ENCODE measurements at regions of chr16 and their contacts with region 1.

Region 1: DNA sequence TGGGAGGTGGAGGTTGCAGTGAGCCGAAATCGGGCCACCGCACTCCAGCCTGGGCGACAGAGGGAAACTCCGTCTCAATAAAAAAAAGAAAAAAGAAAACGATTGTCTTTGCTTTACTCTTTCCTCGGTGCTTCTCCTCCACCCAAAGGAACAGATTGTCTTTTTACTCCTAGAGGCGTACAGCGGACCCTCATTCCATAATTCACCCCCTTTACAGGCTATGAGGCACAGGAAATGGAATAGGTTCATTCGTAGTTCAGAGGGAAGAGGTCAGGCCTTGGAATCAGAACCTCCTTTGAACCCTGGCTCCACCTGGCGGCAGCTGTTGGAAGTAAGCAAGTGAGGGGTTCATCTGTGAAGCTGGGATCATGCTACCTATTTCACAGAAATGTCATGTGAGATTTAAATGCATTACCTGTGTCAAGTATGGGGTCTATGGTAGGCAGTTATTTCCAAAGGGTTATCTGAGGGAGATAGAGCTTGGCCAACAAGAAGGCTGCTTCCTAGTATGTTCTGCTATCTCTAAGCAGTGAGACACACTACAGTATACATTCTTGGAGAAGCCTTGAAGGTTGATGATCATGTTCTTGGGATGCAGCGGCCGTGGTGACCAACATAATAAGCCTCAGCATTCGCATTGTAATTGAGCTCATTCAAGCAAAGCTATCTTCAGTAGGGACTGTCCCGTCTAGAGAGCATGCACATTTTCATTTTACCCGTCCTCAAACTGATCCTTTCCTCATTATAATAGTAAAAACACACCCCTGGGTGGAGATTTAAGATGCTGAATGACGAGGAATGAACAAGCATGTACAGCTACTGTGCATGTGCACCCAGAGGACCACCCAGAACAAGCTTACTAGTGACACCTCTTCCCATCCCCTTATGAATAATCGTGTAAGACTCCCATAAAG is 18.7 kb upstream of the ZNF689 start:
- DNase-seq: peak in 1 of 2 donors; percentile 93
- H3K4me3 ChIP-seq: peak overlapping the region in 1 of 2 donors; percentile 40
- H3K27ac ChIP-seq: no peak overlapping the region
- H3K4me1 ChIP-seq: peaks cover 0 to 3% of the 10 kb centered on the region in 2 donors
- H3K27me3 ChIP-seq: no peaks in the 10 kb centered on the region
- CTCF ChIP-seq: peak; percentile 76 to 89 (median 85)

Region 2: DNA sequence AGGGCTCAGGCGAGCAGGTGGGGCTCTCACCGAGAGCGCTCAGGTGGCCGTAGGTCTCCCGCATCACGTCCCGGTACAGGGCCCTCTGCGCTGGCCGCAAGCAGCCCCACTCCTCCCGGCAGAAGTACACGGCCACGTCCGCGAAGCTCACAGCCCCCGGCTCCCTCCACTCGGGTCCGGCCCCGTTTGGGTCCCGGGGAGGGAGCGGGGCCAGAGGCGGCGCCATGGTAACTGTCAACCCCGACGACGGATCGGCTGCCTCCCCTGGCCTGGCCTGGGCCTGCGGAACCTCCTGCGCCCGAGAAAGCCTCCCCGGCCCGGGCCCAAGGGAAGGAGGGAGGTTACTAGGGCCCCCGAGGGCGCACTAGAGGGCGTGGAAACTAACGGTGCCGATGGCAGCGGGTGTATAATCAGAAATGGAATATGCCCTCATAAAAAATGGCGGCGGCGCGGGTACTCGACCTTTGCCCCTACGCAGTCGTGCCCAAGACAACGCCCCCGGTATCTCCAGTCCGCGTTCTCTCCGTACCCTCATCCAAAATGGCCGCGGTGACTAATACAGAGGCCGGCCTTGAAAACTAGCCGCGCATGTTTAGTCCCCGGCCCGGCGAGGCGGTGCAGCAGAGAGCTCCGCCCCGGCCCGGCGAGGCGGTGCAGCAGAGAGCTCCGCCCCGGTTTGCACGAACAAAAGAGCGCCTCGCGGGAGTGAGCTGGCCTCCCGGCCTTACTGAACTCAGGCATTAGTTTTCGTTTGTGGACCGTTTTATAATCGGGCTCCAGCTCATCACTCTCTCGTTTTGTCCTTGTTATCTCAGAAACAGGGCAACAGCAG is 70.7 kb before region 1 on chr16 and contains the start of gene ZNF764:
- intact Hi-C with region 1: loop called (anchors 1 kb)
- DNase-seq: peak; percentile 96 to 99
- H3K4me3 ChIP-seq: peak within 1 kb of the TSS; percentile 91
- H3K27ac ChIP-seq: peak within 1 kb of the TSS; percentile 92 to 94
- H3K4me1 ChIP-seq: peaks cover 9 to 10% of the 10 kb centered on the region in 2 donors
- H3K27me3 ChIP-seq: no peaks in the 10 kb centered on the region
- CTCF ChIP-seq: peak in 1 of 3 experiments; percentile 1
- total RNA-seq, gene ZNF764: 10.9 TPM

Region 3: DNA sequence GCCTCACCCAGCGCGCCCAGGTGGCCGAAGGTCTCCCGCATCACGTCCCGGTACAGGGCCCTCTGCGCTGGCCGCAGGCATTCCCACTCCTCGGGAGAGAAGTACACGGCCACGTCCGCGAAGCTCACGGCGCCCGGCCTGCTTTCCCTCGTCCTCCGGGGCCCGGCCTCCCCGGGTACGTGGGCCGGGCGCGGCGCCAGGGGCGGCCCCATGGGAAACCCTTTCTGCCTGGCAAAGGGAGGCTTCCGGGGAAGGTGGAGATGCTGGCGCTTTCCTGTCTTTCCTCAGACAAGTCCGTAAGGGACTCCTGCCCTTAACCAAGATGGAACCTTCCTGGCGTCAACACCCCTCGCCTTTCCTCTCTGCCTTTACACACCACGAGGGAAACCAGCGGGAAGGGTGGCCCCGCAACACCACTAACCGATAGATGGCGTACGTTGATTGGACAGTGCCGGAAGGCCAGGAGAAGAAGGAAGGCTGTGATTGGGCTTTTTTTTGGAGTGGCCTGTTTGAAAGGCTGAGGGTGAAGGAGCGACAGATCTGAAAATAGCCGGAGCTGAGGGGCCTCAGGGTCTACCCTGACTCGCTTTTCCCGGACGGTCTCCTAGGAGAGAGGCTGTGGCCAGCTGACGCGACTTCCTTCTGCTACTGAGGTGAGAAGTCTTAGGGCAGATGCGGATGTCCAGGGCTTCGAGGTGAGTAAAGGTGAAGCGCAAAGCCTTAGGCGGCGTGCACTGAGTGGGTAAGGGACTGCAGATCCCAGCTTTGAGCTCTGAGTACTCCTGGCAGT is 43.3 kb before region 1 on chr16 and contains the start of gene ZNF785:
- intact Hi-C with region 1: loop called (anchors 1 kb)
- DNase-seq: peak; percentile 97 to 99
- H3K4me3 ChIP-seq: peak within 1 kb of the TSS; percentile 82 to 90
- H3K27ac ChIP-seq: peak within 1 kb of the TSS; percentile 92 to 93
- H3K4me1 ChIP-seq: peaks cover 0 to 16% of the 10 kb centered on the region in 2 donors
- H3K27me3 ChIP-seq: no peaks in the 10 kb centered on the region
- CTCF ChIP-seq: peak in 2 of 3 experiments; percentile 17 to 23
- total RNA-seq, gene ZNF785: 12.1 TPM

Region 4: DNA sequence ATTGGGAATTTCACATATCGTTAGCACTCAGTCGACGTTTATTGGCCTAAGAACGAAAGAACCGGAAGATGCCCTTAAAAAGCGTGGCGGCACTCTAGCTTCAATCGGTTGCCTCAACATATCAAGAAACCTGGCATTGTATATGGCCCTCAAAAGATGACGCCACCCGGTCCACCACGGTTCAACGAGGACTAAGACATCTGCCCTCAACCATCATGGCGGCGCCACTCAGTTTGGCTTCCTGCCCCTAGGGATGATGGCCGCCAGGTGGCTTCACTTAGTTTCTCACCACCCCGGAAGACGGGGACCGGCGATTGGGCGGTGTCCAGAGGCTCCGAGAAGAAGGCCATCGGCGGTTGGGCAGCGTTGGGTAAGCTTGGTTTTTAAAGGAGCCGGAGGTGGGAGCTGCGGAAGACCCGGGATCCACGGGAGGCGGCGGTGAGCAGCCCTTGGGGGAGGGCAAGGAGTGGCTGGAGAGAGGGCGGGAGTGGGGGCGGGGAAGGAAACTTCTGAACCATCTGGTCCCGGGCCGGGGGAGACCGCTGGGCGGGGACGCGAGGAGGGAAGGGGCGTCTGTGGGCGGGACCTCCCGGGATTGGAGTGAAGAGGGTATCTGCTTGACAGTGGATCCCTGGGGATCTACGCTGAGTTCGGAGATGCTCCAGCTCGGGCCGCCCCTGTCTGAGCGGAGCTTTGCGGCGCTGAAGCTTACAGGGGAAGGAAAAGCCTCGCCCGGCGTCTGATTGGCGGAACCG is 21.7 kb after region 1 on chr16 and contains the start of gene PRR14:
- intact Hi-C with region 1: loop called (anchors 1 kb)
- DNase-seq: peak; percentile 99 to 100
- H3K4me3 ChIP-seq: peak within 1 kb of the TSS; percentile 74 to 91
- H3K27ac ChIP-seq: peak within 1 kb of the TSS; percentile 95
- H3K4me1 ChIP-seq: peaks cover 6 to 18% of the 10 kb centered on the region in 2 donors
- H3K27me3 ChIP-seq: no peaks in the 10 kb centered on the region
- CTCF ChIP-seq: peak in 2 of 3 experiments; percentile 33 to 67
- total RNA-seq, gene PRR14: 124 TPM

Measured in ascending aorta (tissue), 2 donors.